BJ (cell line): ENCODE measurements at regions of chr17 and their contacts with region 1.

Region 1: GRCh38 chr17:737561-738113 is 5.2 kb downstream of the TLCD3A start:
- DNase-seq: no peak
- H3K4me3 ChIP-seq: no peak overlapping the region
- H3K27me3 ChIP-seq: no peaks in the 10 kb centered on the region
- CTCF ChIP-seq: no peak

Region 2: DNA sequence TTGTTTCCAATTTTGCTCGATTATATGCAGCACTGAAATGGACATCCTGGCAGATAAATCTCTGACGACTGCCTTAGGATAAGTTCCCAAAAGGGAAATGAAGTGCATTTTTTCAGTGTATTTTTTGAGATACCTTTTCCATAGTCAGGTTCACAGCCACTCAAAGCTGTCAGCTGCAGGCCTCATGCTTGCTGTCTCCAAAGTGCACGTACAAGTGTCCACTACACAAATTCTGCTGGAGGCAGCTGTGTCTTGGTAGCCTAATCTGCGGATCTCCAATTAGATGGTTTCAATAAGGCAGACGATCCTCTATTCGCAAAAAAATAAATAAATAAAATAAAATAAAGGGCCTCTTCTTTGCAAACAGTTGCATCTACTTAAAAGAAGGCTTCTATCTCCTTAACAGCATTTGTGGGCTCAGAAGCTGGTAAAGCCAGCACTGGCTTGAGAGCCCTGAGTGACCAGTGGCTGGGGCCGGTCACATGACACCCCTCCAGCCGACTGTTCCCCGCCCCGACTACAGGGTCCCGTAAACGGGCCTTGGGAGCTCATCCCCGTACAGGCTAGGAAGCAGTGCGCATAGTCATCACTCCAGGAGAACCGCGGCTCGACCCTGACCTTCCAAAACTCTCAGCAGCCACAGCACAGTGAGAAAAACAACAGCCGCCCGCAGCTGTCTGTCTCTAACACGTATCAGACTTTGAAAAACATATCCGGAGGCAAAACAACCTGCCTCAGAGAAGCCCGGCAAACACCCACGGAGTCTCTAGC is 403.8 kb before region 1 on chr17:
- CTCF ChIA-PET with region 1: no interaction called
- POLR2A ChIA-PET with region 1: no interaction called
- DNase-seq: no peak
- H3K4me3 ChIP-seq: no peak overlapping the region
- H3K27me3 ChIP-seq: 0 out of 2 replicates have a peak, but pooled peaks cover 1% of the 10 kb centered on the region
- CTCF ChIP-seq: no peak

Region 3: DNA sequence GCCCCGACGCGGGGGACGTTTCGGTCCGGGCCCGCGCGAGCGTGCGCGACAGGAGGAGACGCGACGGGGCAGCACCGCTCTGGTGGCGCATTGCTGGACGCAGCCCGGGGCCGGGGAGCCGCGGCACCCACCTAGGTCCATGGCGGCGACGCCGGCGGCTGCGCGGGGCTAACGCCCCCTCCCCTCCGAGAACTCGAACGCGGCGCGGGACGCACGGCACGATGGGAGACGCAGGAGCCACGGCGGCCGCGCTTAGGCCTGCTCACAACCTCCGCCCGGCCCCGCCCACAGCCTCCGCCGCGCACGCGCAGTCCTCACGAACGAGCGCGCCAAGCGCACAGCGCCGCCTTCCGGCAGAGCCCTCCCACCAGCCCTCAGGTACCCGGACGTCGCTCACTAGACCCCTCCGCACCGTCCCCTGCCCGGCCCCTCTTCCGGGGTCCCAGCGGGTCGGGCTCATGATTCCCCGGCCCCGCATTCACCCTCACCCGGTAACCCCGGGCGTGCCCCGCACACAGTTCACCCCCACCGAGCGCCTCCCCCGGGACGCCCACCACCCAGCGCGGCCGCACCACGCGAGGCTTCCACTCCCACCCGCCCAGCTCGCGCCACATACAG is 14.5 kb after region 1 on chr17 and contains the start of gene GEMIN4:
- CTCF ChIA-PET with region 1: interaction called, 21 read pairs
- POLR2A ChIA-PET with region 1: no interaction called
- DNase-seq: peak; percentile 25
- H3K4me3 ChIP-seq: peak within 1 kb of the TSS; percentile 69
- H3K27me3 ChIP-seq: no peaks in the 10 kb centered on the region
- CTCF ChIP-seq: peak; percentile 87
- polyA plus RNA-seq, gene GEMIN4: 10.0 and 15.7 TPM in 2 replicates

Region 4: GRCh38 chr17:1039511-1040215 is 302.0 kb after region 1 on chr17:
- CTCF ChIA-PET with region 1: no interaction called
- POLR2A ChIA-PET with region 1: no interaction called
- DNase-seq: no peak
- H3K4me3 ChIP-seq: no peak overlapping the region
- H3K27me3 ChIP-seq: no peaks in the 10 kb centered on the region
- CTCF ChIP-seq: no peak